Activated naive CD8-positive, alpha-beta T cell treated with anti-CD3 and anti-CD28 coated beads, Interleukin-2, amount 10 ng/mL, durations not matched to agents 7 days and 5 days (primary cell): ENCODE measurements at regions of chr12 and their contacts with region 1.

Region 1: GRCh38 chr12:105330283-105330930 is at the start of gene C12orf75:
- DNase-seq: peak; percentile 95
- ATAC-seq: peak; percentile 87
- H3K4me3 Mint-ChIP-seq: peak within 1 kb of the TSS; percentile 85
- H3K27ac Mint-ChIP-seq: peak within 1 kb of the TSS; percentile 91
- H3K4me1 Mint-ChIP-seq: peaks cover 69% of the 10 kb centered on the region
- H3K27me3 Mint-ChIP-seq: no peaks in the 10 kb centered on the region
- total RNA-seq, gene C12orf75: 167 to 172 TPM

Region 2: GRCh38 chr12:105319691-105320209 is 10.7 kb before region 1 on chr12:
- POLR2A ChIA-PET with region 1: interaction called, 21 read pairs
- DNase-seq: no peak
- ATAC-seq: peak; percentile 75
- H3K4me3 Mint-ChIP-seq: no peak overlapping the region
- H3K27ac Mint-ChIP-seq: no peak overlapping the region
- H3K4me1 Mint-ChIP-seq: peaks cover 39% of the 10 kb centered on the region
- H3K27me3 Mint-ChIP-seq: peaks cover 3% of the 10 kb centered on the region

Region 3: GRCh38 chr12:105357162-105357691 is 26.8 kb after region 1 on chr12:
- POLR2A ChIA-PET with region 1: interaction called, 21 read pairs
- DNase-seq: no peak
- ATAC-seq: peak; percentile 77
- H3K4me3 Mint-ChIP-seq: peak overlapping the region; percentile 67
- H3K27ac Mint-ChIP-seq: peak overlapping the region; percentile 93
- H3K4me1 Mint-ChIP-seq: peaks cover 48% of the 10 kb centered on the region
- H3K27me3 Mint-ChIP-seq: no peaks in the 10 kb centered on the region

Region 4: GRCh38 chr12:105401198-105401597 is 70.8 kb after region 1 on chr12:
- POLR2A ChIA-PET with region 1: no interaction called
- DNase-seq: no peak
- ATAC-seq: no peak
- H3K4me3 Mint-ChIP-seq: no peak overlapping the region
- H3K27ac Mint-ChIP-seq: no peak overlapping the region
- H3K4me1 Mint-ChIP-seq: no peaks in the 10 kb centered on the region
- H3K27me3 Mint-ChIP-seq: no peaks in the 10 kb centered on the region